ENCODE measurements at regions of chr1 and their contacts with region 1.

Region 1: GRCh38 chr1:9910425-9911178 is 533 bp upstream of the CTNNBIP1 start:
- DNase-seq: peak; percentile 98
- H3K27ac ChIP-seq: peak overlapping the region; percentile 96
- CTCF ChIP-seq: no peak

Region 2: GRCh38 chr1:9626201-9626608 is 284.4 kb before region 1 on chr1:
- CTCF ChIA-PET with region 1: interaction called, 14 read pairs
- POLR2A ChIA-PET with region 1: no interaction called
- DNase-seq: no peak
- H3K27ac ChIP-seq: no peak overlapping the region
- CTCF ChIP-seq: no peak

Region 3: GRCh38 chr1:9872430-9873165 is 38.0 kb before region 1 on chr1:
- CTCF ChIA-PET with region 1: interaction called, 16 read pairs
- POLR2A ChIA-PET with region 1: interaction called, 5 read pairs
- DNase-seq: peak; percentile 48
- H3K27ac ChIP-seq: peak overlapping the region; percentile 59
- CTCF ChIP-seq: no peak

Region 4: DNA sequence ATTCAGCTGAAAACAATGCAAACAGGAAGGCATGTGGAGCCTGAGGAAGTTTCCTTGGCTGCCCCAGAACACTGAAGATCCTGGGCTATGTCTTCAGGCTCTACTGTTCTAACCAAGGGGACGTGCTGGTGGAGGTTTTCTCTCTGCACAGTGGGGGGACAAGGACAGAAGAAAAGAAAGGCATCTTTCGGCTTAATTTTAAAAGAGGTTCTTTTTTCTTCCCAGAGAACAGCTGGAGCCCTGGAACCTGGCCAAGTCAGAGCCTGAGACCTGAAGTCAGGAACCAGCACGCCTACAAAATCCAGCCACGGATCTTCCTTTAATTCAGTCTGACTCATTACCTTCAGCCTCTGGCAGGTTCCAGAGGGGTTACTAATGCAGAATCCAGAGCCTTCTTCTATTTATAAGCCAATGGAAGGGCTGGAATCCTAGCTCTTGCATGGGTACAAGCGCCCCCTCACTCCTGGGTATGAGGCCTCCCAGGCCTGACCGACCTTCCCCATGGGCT is 20.3 kb before region 1 on chr1:
- CTCF ChIA-PET with region 1: interaction called, 3 read pairs
- POLR2A ChIA-PET with region 1: interaction called, 10 read pairs
- DNase-seq: peak; percentile 95
- H3K27ac ChIP-seq: peak overlapping the region; percentile 99
- CTCF ChIP-seq: no peak

Region 5: GRCh38 chr1:9985001-9985400 is 74.4 kb after region 1 on chr1:
- CTCF ChIA-PET with region 1: no interaction called
- POLR2A ChIA-PET with region 1: no interaction called
- DNase-seq: no peak
- H3K27ac ChIP-seq: no peak overlapping the region
- CTCF ChIP-seq: no peak

Measured in RWPE1 (cell line).